Caco-2 (cell line): ENCODE measurements at regions of chr13 and their contacts with region 1.

Region 1: GRCh38 chr13:29791997-29792780 is 58.2 kb downstream of the UBL3 start:
- DNase-seq: no peak
- H3K4me3 ChIP-seq: no peak overlapping the region
- H3K4me3 Mint-ChIP-seq: no peak overlapping the region
- H3K27ac Mint-ChIP-seq: peak overlapping the region; percentile 9
- H3K4me1 ChIP-seq: peaks cover 40% of the 10 kb centered on the region
- H3K4me1 Mint-ChIP-seq: peaks cover 38% of the 10 kb centered on the region
- H3K27me3 ChIP-seq: no peaks in the 10 kb centered on the region
- H3K27me3 Mint-ChIP-seq: no peaks in the 10 kb centered on the region
- CTCF ChIP-seq: no peak

Region 2: GRCh38 chr13:29810145-29810742 is 18.1 kb after region 1 on chr13:
- CTCF ChIA-PET with region 1: no interaction called
- POLR2A ChIA-PET with region 1: no interaction called
- intact Hi-C with region 1: no loop called
- DNase-seq: no peak
- H3K4me3 ChIP-seq: no peak overlapping the region
- H3K4me3 Mint-ChIP-seq: peak overlapping the region; percentile 6
- H3K27ac Mint-ChIP-seq: peak overlapping the region; percentile 12
- H3K4me1 ChIP-seq: peaks cover 51% of the 10 kb centered on the region
- H3K4me1 Mint-ChIP-seq: peaks cover 36% of the 10 kb centered on the region
- H3K27me3 ChIP-seq: no peaks in the 10 kb centered on the region
- H3K27me3 Mint-ChIP-seq: no peaks in the 10 kb centered on the region
- CTCF ChIP-seq: no peak

Region 3: GRCh38 chr13:29830000-29830399 is 37.8 kb after region 1 on chr13:
- CTCF ChIA-PET with region 1: no interaction called
- POLR2A ChIA-PET with region 1: interaction called, 5 read pairs
- intact Hi-C with region 1: loop called (anchors 5 kb)
- DNase-seq: no peak
- H3K4me3 ChIP-seq: no peak overlapping the region
- H3K4me3 Mint-ChIP-seq: no peak overlapping the region
- H3K27ac Mint-ChIP-seq: no peak overlapping the region
- H3K4me1 ChIP-seq: peaks cover 20% of the 10 kb centered on the region
- H3K4me1 Mint-ChIP-seq: peaks cover 22% of the 10 kb centered on the region
- H3K27me3 ChIP-seq: no peaks in the 10 kb centered on the region
- H3K27me3 Mint-ChIP-seq: no peaks in the 10 kb centered on the region
- CTCF ChIP-seq: no peak

Region 4: GRCh38 chr13:30808589-30808988 is 1016.4 kb after region 1 on chr13:
- CTCF ChIA-PET with region 1: no interaction called
- POLR2A ChIA-PET with region 1: no interaction called
- intact Hi-C with region 1: no loop called
- DNase-seq: no peak
- H3K4me3 ChIP-seq: no peak overlapping the region
- H3K4me3 Mint-ChIP-seq: no peak overlapping the region
- H3K27ac Mint-ChIP-seq: no peak overlapping the region
- H3K4me1 ChIP-seq: no peaks in the 10 kb centered on the region
- H3K4me1 Mint-ChIP-seq: no peaks in the 10 kb centered on the region
- H3K27me3 ChIP-seq: no peaks in the 10 kb centered on the region
- H3K27me3 Mint-ChIP-seq: no peaks in the 10 kb centered on the region
- CTCF ChIP-seq: no peak

Region 5: GRCh38 chr13:31174018-31174417 is 1381.8 kb after region 1 on chr13:
- CTCF ChIA-PET with region 1: no interaction called
- POLR2A ChIA-PET with region 1: no interaction called
- intact Hi-C with region 1: no loop called
- DNase-seq: no peak
- H3K4me3 ChIP-seq: no peak overlapping the region
- H3K4me3 Mint-ChIP-seq: no peak overlapping the region
- H3K27ac Mint-ChIP-seq: peak overlapping the region; percentile 90
- H3K4me1 ChIP-seq: peaks cover 18% of the 10 kb centered on the region
- H3K4me1 Mint-ChIP-seq: peaks cover 24% of the 10 kb centered on the region
- H3K27me3 ChIP-seq: no peaks in the 10 kb centered on the region
- H3K27me3 Mint-ChIP-seq: no peaks in the 10 kb centered on the region
- CTCF ChIP-seq: peak; percentile 16 to 18